ENCODE measurements at regions of chr10 and their contacts with region 1.

Region 1: GRCh38 chr10:96743988-96744585 is 23.8 kb upstream of the PIK3AP1 start:
- DNase-seq: no peak

Region 2: DNA sequence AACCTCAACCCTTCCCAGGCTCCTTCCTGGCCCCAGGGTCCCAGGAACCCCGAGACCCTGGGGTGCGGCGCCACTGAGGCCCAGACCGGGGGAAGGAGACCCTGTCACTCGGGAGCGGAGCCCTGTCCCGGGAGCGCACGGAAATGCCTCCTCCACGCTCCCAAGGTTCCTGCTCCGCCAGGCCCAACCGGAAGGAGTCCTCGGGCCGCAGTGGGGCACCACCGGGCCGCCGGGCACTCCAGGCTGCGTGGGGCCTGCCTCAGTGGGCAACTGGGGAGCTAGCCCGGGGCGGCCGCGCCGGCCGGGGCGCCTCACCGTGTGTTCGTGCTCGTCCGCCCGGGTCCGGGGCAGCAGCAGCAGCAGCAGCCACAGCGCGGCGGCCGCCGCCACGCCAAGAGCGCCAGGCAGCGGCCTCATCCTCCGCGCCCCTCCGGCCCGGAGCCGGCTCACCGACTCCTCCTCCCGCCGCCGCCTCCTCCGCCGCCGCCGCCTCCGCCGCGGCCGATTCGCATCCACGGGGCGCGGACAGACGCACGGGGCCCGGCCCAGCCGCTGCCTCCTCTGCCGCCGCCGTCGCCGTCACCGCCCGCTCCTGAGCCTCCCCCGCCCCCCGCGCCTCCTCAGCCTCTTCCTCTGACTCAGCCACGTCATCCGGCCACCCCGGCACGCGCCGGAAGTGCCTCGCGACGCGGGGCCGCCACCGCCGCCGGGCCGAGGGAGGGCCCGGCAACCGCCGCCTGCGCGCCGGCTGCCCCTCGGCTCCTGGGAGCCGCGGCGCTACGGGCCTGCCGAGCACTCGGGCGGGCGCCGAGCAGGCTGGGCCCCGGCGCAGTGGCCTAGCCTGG is 157.4 kb before region 1 on chr10 and contains the start of gene TM9SF3:
- CTCF ChIA-PET with region 1: interaction called, 22 read pairs
- POLR2A ChIA-PET with region 1: no interaction called
- DNase-seq: peak; percentile 91

Region 3: DNA sequence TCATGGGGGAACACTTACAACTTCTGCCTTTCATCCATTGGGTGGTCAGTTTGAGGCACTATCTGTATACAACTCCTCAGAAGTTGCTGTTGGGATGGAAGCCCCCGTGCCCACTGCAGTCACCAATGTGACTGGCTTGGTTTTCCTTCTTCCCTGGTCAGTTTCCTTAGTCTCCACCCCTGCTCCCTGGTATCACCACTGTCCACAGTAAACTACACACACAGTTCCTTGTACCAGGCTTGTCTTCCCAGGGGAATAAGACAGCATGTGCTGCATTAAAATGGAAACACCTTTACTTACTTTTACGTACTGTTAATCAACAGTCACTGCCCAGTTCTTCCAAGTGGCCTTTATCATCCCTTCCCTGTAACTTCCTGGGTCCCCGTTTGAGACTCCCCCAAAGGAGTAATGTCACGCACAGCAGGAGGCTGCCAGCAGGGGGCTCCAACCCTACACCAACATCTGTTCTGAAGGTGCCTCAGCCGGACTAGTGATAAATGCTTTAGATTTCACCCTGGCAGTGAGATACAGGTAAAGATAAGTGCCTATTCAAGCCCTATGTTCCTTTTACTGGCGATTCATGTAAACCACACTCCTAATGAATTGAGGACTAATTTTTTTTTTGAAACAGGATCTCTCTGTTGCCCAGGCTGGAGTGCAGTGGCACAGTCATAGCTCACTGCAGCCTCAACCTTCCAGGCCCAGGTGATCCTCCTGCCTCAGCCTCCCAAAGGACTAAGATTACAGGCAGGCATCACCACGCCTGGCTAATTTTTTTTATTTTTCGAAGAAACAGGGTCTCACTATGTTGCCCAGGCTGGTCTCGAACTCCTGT is 21.5 kb after region 1 on chr10:
- CTCF ChIA-PET with region 1: no interaction called
- POLR2A ChIA-PET with region 1: no interaction called
- DNase-seq: peak; percentile 59

Measured in HEK293T (cell line).